PC-9 (cell line): ENCODE measurements at regions of chr13 and their contacts with region 1.

Region 1: GRCh38 chr13:29508130-29508875 is 87.2 kb downstream of the SLC7A1 start:
- DNase-seq: peak; percentile 52 to 70
- H3K4me3 ChIP-seq: no peak overlapping the region
- H3K27ac ChIP-seq: no peak overlapping the region
- H3K4me1 ChIP-seq: no peaks in the 10 kb centered on the region
- H3K27me3 ChIP-seq: no peaks in the 10 kb centered on the region
- CTCF ChIP-seq: peak; percentile 94

Region 2: DNA sequence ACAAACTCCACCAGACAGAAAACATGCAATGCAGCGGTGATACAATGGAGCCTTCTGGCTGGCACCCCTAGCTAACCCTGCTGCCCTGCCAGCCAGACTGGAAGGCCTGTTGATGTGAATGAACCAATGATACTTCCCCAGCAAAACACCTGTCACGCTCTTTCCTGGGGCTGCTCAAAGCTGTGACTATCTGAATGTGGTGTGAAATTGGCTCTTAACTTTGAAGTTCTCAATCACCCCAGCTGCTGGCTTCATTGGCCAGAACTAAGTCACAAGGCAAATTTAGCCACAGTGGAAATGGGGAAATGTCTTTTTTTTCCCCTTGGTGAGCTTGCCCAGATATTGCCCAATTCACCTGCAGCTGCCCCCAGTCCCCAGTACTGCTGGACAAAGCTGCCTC is 60.1 kb before region 1 on chr13:
- CTCF ChIA-PET with region 1: no interaction called
- POLR2A ChIA-PET with region 1: no interaction called
- intact Hi-C with region 1: no loop called
- DNase-seq: no peak
- H3K4me3 ChIP-seq: no peak overlapping the region
- H3K27ac ChIP-seq: no peak overlapping the region
- H3K4me1 ChIP-seq: no peaks in the 10 kb centered on the region
- H3K27me3 ChIP-seq: peaks cover 67% of the 10 kb centered on the region
- CTCF ChIP-seq: no peak

Region 3: DNA sequence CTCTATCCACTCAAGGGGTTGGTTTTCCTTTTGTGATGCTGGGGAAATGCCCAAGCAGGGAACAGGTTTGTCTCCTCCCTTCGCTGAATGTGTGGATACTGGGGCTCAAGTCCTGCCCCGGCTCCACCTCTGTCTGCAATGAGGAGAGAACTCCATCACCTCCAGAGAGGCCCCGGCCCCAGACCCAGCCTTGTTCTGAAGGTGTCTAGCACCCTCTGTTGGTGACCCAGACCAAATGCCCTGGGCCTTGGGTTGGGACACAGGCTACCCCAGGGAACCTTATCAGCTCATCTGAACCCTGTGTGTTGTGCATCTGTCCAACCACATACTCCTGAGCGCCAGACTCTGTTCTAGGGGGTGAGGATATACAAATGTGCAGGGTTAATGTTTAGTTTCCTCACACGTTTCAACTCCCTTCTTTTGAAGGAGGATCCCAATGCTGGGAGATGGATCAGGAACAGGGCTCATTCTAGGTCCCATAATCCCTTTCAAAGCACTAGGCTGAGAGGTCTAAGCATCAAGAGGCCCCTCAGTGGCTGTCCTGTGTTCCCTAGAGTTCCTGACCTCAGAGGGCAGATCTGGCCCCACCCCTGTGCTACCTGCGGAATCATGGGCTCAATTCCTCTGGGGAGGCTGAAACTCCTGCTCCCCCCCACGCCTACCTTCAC is 199.7 kb after region 1 on chr13:
- CTCF ChIA-PET with region 1: no interaction called
- POLR2A ChIA-PET with region 1: no interaction called
- intact Hi-C with region 1: loop called (anchors 1 kb)
- DNase-seq: peak in 1 of 2 experiments; percentile 17
- H3K4me3 ChIP-seq: no peak overlapping the region
- H3K27ac ChIP-seq: no peak overlapping the region
- H3K4me1 ChIP-seq: peaks cover 7% of the 10 kb centered on the region
- H3K27me3 ChIP-seq: no peaks in the 10 kb centered on the region
- CTCF ChIP-seq: peak; percentile 72

Region 4: GRCh38 chr13:29743201-29743786 is 235.0 kb after region 1 on chr13:
- CTCF ChIA-PET with region 1: no interaction called
- POLR2A ChIA-PET with region 1: no interaction called
- intact Hi-C with region 1: no loop called
- DNase-seq: no peak
- H3K4me3 ChIP-seq: no peak overlapping the region
- H3K27ac ChIP-seq: no peak overlapping the region
- H3K4me1 ChIP-seq: no peaks in the 10 kb centered on the region
- H3K27me3 ChIP-seq: no peaks in the 10 kb centered on the region
- CTCF ChIP-seq: no peak

Region 5: GRCh38 chr13:29771247-29771646 is 262.9 kb after region 1 on chr13:
- CTCF ChIA-PET with region 1: no interaction called
- POLR2A ChIA-PET with region 1: no interaction called
- intact Hi-C with region 1: loop called (anchors 5 kb)
- DNase-seq: peak in 1 of 2 experiments; percentile 46
- H3K4me3 ChIP-seq: no peak overlapping the region
- H3K27ac ChIP-seq: no peak overlapping the region
- H3K4me1 ChIP-seq: no peaks in the 10 kb centered on the region
- H3K27me3 ChIP-seq: no peaks in the 10 kb centered on the region
- CTCF ChIP-seq: peak; percentile 78

Region 6: GRCh38 chr13:29844441-29844840 is 336.1 kb after region 1 on chr13:
- CTCF ChIA-PET with region 1: no interaction called
- POLR2A ChIA-PET with region 1: no interaction called
- intact Hi-C with region 1: loop called (anchors 5 kb)
- DNase-seq: no peak
- H3K4me3 ChIP-seq: no peak overlapping the region
- H3K27ac ChIP-seq: no peak overlapping the region
- H3K4me1 ChIP-seq: peaks cover 57% of the 10 kb centered on the region
- H3K27me3 ChIP-seq: no peaks in the 10 kb centered on the region
- CTCF ChIP-seq: no peak

Region 7: GRCh38 chr13:30114571-30115256 is 606.4 kb after region 1 on chr13:
- CTCF ChIA-PET with region 1: interaction called, 3 read pairs
- POLR2A ChIA-PET with region 1: no interaction called
- intact Hi-C with region 1: loop called (anchors 1 kb)
- DNase-seq: peak; percentile 64 to 85
- H3K4me3 ChIP-seq: peak overlapping the region; percentile 64; the same call in 1 of the 2 replicates
- H3K27ac ChIP-seq: 0 out of 2 replicates have a peak overlapping the region, but pooled peaks have one; percentile 13
- H3K4me1 ChIP-seq: peaks cover 17% of the 10 kb centered on the region
- H3K27me3 ChIP-seq: no peaks in the 10 kb centered on the region
- CTCF ChIP-seq: peak; percentile 91